CD8-positive, alpha-beta T cell (primary cell): ENCODE measurements at regions of chr4 and their contacts with region 1.

Region 1: GRCh38 chr4:121358473-121358872 is 22.3 kb downstream of the QRFPR start:
- DNase-seq: no peak
- ATAC-seq: no peak
- H3K4me3 ChIP-seq: no peak overlapping the region
- H3K4me3 Mint-ChIP-seq: no peak overlapping the region
- H3K27ac ChIP-seq: no peak overlapping the region
- H3K27ac Mint-ChIP-seq: no peak overlapping the region
- H3K4me1 ChIP-seq: no peaks in the 10 kb centered on the region
- H3K4me1 Mint-ChIP-seq: no peaks in the 10 kb centered on the region
- H3K27me3 ChIP-seq: no peaks in the 10 kb centered on the region
- H3K27me3 Mint-ChIP-seq: peaks cover 22% of the 10 kb centered on the region
- CTCF ChIP-seq: no peak

Region 2: GRCh38 chr4:120948382-120948781 is 410.1 kb before region 1 on chr4:
- CTCF ChIA-PET with region 1: no interaction called
- POLR2A ChIA-PET with region 1: no interaction called
- intact Hi-C with region 1: no loop called
- DNase-seq: no peak
- ATAC-seq: no peak
- H3K4me3 ChIP-seq: no peak overlapping the region
- H3K4me3 Mint-ChIP-seq: no peak overlapping the region
- H3K27ac ChIP-seq: no peak overlapping the region
- H3K27ac Mint-ChIP-seq: no peak overlapping the region
- H3K4me1 ChIP-seq: no peaks in the 10 kb centered on the region
- H3K4me1 Mint-ChIP-seq: no peaks in the 10 kb centered on the region
- H3K27me3 ChIP-seq: no peaks in the 10 kb centered on the region
- H3K27me3 Mint-ChIP-seq: no peaks in the 10 kb centered on the region
- CTCF ChIP-seq: no peak

Region 3: GRCh38 chr4:121370729-121371325 is 12.4 kb after region 1 on chr4:
- CTCF ChIA-PET with region 1: interaction called, 9 read pairs
- POLR2A ChIA-PET with region 1: no interaction called
- intact Hi-C with region 1: loop called (anchors 1 kb)
- DNase-seq: peak in 4 of 9 experiments; percentile 23 to 43 (median 30)
- ATAC-seq: no peak
- H3K4me3 ChIP-seq: no peak overlapping the region
- H3K4me3 Mint-ChIP-seq: no peak overlapping the region
- H3K27ac ChIP-seq: no peak overlapping the region
- H3K27ac Mint-ChIP-seq: no peak overlapping the region
- H3K4me1 ChIP-seq: no peaks in the 10 kb centered on the region
- H3K4me1 Mint-ChIP-seq: no peaks in the 10 kb centered on the region
- H3K27me3 ChIP-seq: no peaks in the 10 kb centered on the region
- H3K27me3 Mint-ChIP-seq: peaks cover 9% of the 10 kb centered on the region
- CTCF ChIP-seq: peak; percentile 44

Region 4: GRCh38 chr4:121462660-121463261 is 104.3 kb after region 1 on chr4:
- CTCF ChIA-PET with region 1: no interaction called
- POLR2A ChIA-PET with region 1: no interaction called
- intact Hi-C with region 1: no loop called
- DNase-seq: peak in 6 of 9 experiments; percentile 5 to 60 (median 28)
- ATAC-seq: peak; percentile 48
- H3K4me3 ChIP-seq: no peak overlapping the region
- H3K4me3 Mint-ChIP-seq: no peak overlapping the region
- H3K27ac ChIP-seq: no peak overlapping the region
- H3K27ac Mint-ChIP-seq: no peak overlapping the region
- H3K4me1 ChIP-seq: no peaks in the 10 kb centered on the region
- H3K4me1 Mint-ChIP-seq: no peaks in the 10 kb centered on the region
- H3K27me3 ChIP-seq: peaks cover 0 to 2% of the 10 kb centered on the region in 2 experiments
- H3K27me3 Mint-ChIP-seq: peaks cover 17% of the 10 kb centered on the region
- CTCF ChIP-seq: peak; percentile 46